ENCODE measurements at regions of chr11 and their contacts with region 1.

Region 1: GRCh38 chr11:62621567-62622470 is at the start of gene B3GAT3:
- DNase-seq: peak; percentile 98
- H3K4me3 Mint-ChIP-seq: peak within 1 kb of the TSS; percentile 97
- H3K27ac Mint-ChIP-seq: peak within 1 kb of the TSS; percentile 92
- H3K4me1 Mint-ChIP-seq: peaks cover 12% of the 10 kb centered on the region
- H3K27me3 Mint-ChIP-seq: no peaks in the 10 kb centered on the region
- CTCF ChIP-seq: no peak
- total RNA-seq, gene B3GAT3: 40.1 and 42.4 TPM in 2 replicates

Region 2: GRCh38 chr11:62573592-62574362 is 48.0 kb before region 1 on chr11 and contains the start of gene EEF1G:
- CTCF ChIA-PET with region 1: no interaction called
- POLR2A ChIA-PET with region 1: interaction called, 32 read pairs
- intact Hi-C with region 1: no loop called
- DNase-seq: peak; percentile 100
- H3K4me3 Mint-ChIP-seq: peak within 1 kb of the TSS; percentile 100
- H3K27ac Mint-ChIP-seq: peak within 1 kb of the TSS; percentile 100
- H3K4me1 Mint-ChIP-seq: peaks cover 30% of the 10 kb centered on the region
- H3K27me3 Mint-ChIP-seq: no peaks in the 10 kb centered on the region
- CTCF ChIP-seq: no peak
- total RNA-seq, gene EEF1G: 1,510 and 1,855 TPM in 2 replicates

Region 3: DNA sequence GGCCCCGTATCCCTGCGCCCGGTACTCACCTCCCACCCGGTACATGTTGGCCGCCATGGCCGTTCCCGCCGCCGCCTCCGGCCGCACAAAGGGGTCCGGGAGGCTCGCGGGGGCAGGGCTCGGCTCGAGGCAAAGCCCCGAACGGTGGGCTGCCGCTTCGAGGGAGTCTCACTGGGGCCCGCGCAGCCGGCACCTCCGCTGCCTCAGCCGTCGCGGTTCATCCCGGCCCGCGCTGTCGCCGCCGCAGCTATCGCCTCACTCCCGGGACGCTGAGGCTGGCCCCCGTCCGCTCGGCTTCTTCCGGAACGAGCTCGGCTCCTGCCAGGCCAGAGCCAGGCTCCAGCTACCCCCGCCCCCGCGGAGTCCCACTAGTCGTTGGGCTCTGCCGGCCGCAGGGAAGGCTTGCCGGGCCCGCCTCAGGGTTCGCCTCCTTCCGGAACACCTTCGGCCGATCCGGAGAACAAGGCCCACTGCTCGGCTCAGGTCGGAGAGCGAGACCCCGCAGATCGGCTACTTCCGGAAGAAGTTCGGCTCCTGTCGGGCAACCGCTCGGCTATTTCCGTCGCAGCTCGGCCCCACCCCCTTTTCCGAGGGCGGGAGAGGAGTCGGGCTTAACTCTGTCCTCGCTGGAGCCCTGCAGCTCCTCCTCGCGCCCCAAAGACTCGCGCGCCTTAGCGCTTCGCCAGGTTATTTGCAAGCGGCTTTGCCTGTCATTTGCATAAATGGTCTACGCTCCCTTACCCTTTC is 20.3 kb before region 1 on chr11 and contains the start of gene MTA2:
- CTCF ChIA-PET with region 1: interaction called, 4 read pairs
- POLR2A ChIA-PET with region 1: interaction called, 108 read pairs
- intact Hi-C with region 1: no loop called
- DNase-seq: peak; percentile 98
- H3K4me3 Mint-ChIP-seq: peak within 1 kb of the TSS; percentile 86
- H3K27ac Mint-ChIP-seq: peak within 1 kb of the TSS; percentile 96
- H3K4me1 Mint-ChIP-seq: peaks cover 38% of the 10 kb centered on the region
- H3K27me3 Mint-ChIP-seq: no peaks in the 10 kb centered on the region
- CTCF ChIP-seq: no peak
- total RNA-seq, gene MTA2: 139 and 176 TPM in 2 replicates

Region 4: GRCh38 chr11:62632492-62632891 is 10.7 kb after region 1 on chr11:
- CTCF ChIA-PET with region 1: interaction called, 4 read pairs
- POLR2A ChIA-PET with region 1: interaction called, 11 read pairs
- intact Hi-C with region 1: no loop called
- DNase-seq: no peak
- H3K4me3 Mint-ChIP-seq: no peak overlapping the region
- H3K27ac Mint-ChIP-seq: peak overlapping the region; percentile 82
- H3K4me1 Mint-ChIP-seq: no peaks in the 10 kb centered on the region
- H3K27me3 Mint-ChIP-seq: no peaks in the 10 kb centered on the region
- CTCF ChIP-seq: no peak

Region 5: GRCh38 chr11:62645956-62646824 is 24.4 kb after region 1 on chr11 and contains the start of gene GANAB:
- CTCF ChIA-PET with region 1: interaction called, 9 read pairs
- POLR2A ChIA-PET with region 1: interaction called, 95 read pairs
- intact Hi-C with region 1: no loop called
- DNase-seq: peak; percentile 99
- H3K4me3 Mint-ChIP-seq: peak within 1 kb of the TSS; percentile 95
- H3K27ac Mint-ChIP-seq: peak within 1 kb of the TSS; percentile 92
- H3K4me1 Mint-ChIP-seq: no peaks in the 10 kb centered on the region
- H3K27me3 Mint-ChIP-seq: no peaks in the 10 kb centered on the region
- CTCF ChIP-seq: no peak
- total RNA-seq, gene GANAB: 364 and 374 TPM in 2 replicates

Region 6: DNA sequence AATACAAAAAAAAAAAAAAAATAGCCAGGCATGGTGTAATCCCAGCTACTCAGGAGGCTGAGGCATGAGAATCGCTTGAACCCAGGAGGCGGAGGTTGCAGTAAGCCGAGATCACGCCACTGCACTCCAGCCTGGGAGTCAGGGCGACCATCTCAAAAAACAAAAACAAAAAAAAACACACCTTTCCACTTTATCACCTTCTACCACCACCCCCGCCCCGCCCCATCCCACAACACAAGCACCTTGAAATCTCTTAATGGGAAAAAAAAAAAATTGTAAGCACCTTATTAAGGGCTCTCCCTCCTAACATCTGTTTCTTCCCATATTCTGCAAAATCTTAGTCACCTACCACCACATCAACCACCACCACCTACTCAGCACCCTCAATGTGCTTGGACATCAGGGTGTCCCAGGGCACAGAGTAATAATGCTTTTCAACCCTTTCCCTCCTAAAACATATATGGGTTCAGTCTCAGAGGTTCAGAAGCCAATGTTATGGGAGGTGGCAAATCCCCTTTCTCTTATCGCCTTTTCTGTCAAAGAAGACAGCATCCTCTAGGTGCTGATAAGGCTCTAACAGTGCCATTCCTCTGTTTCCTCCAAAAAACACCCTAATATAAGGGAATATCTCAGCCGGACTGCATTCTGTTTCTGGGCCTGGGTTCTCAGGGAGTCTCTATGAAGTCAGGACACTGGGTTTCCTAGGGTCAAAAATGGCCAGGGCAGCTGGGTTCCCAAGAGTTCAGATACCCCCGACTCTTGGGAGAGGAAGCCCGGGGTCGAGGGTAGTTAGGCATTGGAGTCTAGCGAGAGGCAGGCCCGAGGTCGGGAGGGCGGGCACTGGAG is 30.6 kb after region 1 on chr11:
- CTCF ChIA-PET with region 1: interaction called, 5 read pairs
- POLR2A ChIA-PET with region 1: interaction called, 95 read pairs
- intact Hi-C with region 1: no loop called
- DNase-seq: no peak
- H3K4me3 Mint-ChIP-seq: peak overlapping the region; percentile 93
- H3K27ac Mint-ChIP-seq: peak overlapping the region; percentile 96
- H3K4me1 Mint-ChIP-seq: peaks cover 14% of the 10 kb centered on the region
- H3K27me3 Mint-ChIP-seq: no peaks in the 10 kb centered on the region
- CTCF ChIP-seq: no peak

Measured in MCF 10A (cell line).